ENCODE measurements at regions of chr5 and their contacts with region 1.

Region 1: GRCh38 chr5:53069626-53070025 is 39.9 kb downstream of the MOCS2 start:
- DNase-seq: peak; percentile 86
- ATAC-seq: peak; percentile 96
- H3K4me3 Mint-ChIP-seq: no peak overlapping the region
- H3K27ac Mint-ChIP-seq: peak overlapping the region; percentile 12
- H3K4me1 Mint-ChIP-seq: peaks cover 16% of the 10 kb centered on the region
- H3K27me3 Mint-ChIP-seq: peaks cover 8% of the 10 kb centered on the region
- CTCF ChIP-seq: no peak

Region 2: DNA sequence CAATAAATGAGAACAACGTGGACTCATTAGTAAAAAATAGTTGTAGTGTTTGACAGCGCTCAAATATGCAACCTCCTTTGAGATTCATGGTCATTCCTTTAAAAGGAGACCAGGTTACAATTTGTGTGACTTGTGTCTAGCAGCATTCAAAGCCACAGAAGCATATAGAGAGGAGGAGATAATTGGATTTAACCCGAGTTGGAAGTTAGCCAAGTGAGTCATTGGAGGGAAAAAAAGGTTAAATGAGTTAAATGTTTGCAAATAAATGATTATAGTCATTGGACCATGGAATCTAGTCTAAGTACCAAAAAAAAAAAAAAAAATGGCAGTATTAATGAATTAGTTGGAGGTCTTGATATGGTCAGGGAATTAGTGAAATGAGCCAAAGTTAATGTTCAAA is 191.0 kb before region 1 on chr5:
- CTCF ChIA-PET with region 1: no interaction called
- POLR2A ChIA-PET with region 1: no interaction called
- intact Hi-C with region 1: no loop called
- DNase-seq: no peak
- ATAC-seq: no peak
- H3K4me3 Mint-ChIP-seq: no peak overlapping the region
- H3K27ac Mint-ChIP-seq: no peak overlapping the region
- H3K4me1 Mint-ChIP-seq: no peaks in the 10 kb centered on the region
- H3K27me3 Mint-ChIP-seq: no peaks in the 10 kb centered on the region
- CTCF ChIP-seq: no peak

Region 3: GRCh38 chr5:53008751-53009150 is 60.9 kb before region 1 on chr5:
- CTCF ChIA-PET with region 1: no interaction called
- POLR2A ChIA-PET with region 1: no interaction called
- intact Hi-C with region 1: loop called (anchors 2 kb)
- DNase-seq: peak; percentile 69
- ATAC-seq: peak; percentile 83
- H3K4me3 Mint-ChIP-seq: no peak overlapping the region
- H3K27ac Mint-ChIP-seq: peak overlapping the region; percentile 65
- H3K4me1 Mint-ChIP-seq: peaks cover 56% of the 10 kb centered on the region
- H3K27me3 Mint-ChIP-seq: peaks cover 9% of the 10 kb centered on the region
- CTCF ChIP-seq: no peak

Region 4: GRCh38 chr5:53089345-53089991 is 19.8 kb after region 1 on chr5:
- CTCF ChIA-PET with region 1: interaction called, 15 read pairs
- POLR2A ChIA-PET with region 1: no interaction called
- intact Hi-C with region 1: no loop called
- DNase-seq: no peak
- ATAC-seq: peak; percentile 82
- H3K4me3 Mint-ChIP-seq: peak overlapping the region; percentile 50
- H3K27ac Mint-ChIP-seq: peak overlapping the region; percentile 80
- H3K4me1 Mint-ChIP-seq: peaks cover 32% of the 10 kb centered on the region
- H3K27me3 Mint-ChIP-seq: no peaks in the 10 kb centered on the region
- CTCF ChIP-seq: no peak